AG04449 (cell line): ENCODE measurements at regions of chr17 and their contacts with region 1.

Region 1: DNA sequence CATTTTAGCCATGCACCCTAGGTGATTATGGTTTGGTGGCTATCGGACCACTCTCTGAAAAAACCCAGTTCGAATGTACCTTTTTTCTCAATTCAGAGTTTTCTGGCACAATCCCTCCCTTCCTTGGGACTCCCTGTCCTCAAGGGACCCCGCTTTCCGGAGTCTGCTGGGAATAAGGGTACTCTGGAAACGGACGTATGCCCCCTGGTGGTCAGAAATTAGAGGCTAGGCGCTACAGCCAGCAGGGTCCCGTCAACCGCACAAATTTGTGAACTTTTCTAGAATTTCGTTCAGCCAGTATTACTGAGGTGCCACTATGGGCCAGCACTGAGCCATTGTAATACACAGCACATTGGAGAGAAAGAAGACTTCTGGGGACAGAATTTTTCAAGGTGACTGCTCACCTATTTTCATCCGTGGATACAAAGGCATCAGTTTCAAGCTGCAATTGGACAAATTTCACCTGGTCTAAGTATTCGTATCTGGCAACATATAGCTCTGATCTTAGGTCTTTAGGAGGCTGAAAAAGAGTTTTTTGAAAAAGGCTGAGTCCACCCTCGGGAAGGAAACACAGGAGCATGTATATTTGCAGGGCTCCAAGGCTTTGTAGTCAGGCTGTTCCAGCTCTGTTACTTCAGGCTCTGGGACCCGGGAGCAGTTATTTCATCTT is 27.1 kb upstream of the CRYBA1 start:
- DNase-seq: no peak
- H3K4me3 ChIP-seq: no peak overlapping the region
- CTCF ChIP-seq: peak; percentile 87

Region 2: DNA sequence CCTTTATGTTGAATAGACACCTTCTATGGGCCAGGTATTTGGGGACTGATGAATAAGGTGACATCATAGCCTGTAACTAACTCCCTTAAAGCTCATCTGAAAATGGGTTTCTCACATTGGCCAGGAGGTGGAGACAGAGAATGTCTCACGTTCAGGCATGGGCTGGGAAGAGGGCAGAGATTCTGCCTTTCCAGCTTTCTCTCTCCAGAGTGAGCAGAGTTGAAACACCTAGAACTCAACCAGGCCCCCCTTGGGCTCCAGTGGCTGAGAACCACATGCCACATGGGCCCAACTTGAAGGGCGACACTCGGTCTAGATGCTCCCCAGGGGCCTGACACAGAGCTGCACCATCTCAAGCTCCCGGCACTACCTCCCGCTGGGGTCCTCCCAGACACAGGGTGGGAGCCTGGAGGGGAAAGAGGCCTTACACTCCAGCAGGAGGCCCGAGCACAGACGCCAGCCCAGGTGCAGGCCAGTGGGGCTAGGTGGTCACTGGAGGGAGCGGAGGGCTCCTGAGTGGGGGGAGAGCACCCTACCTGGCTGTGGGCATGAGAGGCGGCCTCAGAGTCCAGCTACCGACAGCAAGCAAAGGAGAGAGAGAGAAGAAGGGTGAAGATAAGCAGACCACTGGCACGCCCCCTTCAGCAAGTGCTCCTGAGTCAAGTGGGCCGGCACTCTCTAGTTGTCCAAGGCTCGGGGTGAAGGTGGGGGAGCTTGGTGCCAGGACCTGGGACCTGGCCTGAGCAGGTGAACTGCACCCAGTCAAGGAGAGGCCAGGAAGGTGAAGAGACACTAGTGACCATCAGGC is 95.2 kb before region 1 on chr17:
- CTCF ChIA-PET with region 1: interaction called, 59 read pairs
- POLR2A ChIA-PET with region 1: no interaction called
- DNase-seq: no peak
- H3K4me3 ChIP-seq: no peak overlapping the region
- CTCF ChIP-seq: peak; percentile 72

Region 3: GRCh38 chr17:29162738-29163341 is 56.7 kb before region 1 on chr17:
- CTCF ChIA-PET with region 1: interaction called, 454 read pairs
- POLR2A ChIA-PET with region 1: no interaction called
- DNase-seq: no peak
- H3K4me3 ChIP-seq: no peak overlapping the region
- CTCF ChIP-seq: no peak

Region 4: DNA sequence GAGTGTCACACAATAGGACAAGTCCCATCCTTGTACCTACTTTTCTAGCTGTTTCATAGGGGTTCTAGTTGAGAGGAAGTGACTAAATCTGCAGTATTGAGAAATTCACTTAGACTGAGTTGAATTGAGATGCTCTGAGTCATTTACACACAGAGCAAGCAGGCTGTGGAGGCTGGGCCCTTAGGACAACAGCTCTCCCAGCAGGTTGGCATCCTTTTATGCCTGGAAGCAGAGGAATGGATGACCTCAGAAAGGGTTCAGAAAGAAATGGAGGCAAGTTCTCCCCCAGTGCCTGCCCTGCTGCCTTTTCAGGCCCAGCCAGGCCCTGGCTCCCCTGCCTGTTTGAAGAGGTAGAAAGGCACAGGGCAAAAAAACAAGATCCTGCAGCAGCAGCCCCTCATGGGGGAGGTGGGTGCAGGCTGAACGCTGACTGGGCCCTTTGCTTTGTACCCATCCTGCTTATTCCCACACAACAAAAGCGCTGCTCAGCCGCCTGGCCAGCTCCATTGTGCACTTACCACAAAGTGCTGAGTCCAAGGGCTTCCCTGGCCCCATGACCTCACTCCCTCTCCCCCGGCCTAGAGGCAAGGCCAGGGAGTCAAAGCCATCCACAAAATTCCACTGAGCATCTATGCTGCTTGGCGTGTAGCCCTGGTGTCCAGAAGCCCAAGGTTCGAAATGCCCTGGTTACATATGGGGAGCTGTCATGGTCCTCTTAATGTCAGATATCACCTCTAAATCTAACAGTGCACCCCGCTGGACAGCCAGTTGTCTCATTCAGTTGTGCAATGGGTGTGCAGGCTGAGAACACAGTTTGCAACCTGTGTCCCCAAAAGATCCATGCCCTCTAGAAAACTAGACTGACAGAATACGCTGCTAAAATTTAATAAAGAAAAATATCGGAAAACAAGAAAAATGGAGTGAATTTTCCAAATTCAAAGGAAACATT is 21.8 kb after region 1 on chr17:
- CTCF ChIA-PET with region 1: interaction called, 70 read pairs
- POLR2A ChIA-PET with region 1: interaction called, 3 read pairs
- DNase-seq: peak; percentile 89
- H3K4me3 ChIP-seq: no peak overlapping the region
- CTCF ChIP-seq: no peak

Region 5: GRCh38 chr17:29293890-29294579 is 74.5 kb after region 1 on chr17 and contains the start of gene NUFIP2:
- CTCF ChIA-PET with region 1: interaction called, 62 read pairs
- POLR2A ChIA-PET with region 1: no interaction called
- DNase-seq: peak; percentile 83
- H3K4me3 ChIP-seq: peak within 1 kb of the TSS; percentile 99
- CTCF ChIP-seq: no peak

Region 6: GRCh38 chr17:29322363-29322762 is 102.8 kb after region 1 on chr17:
- CTCF ChIA-PET with region 1: no interaction called
- POLR2A ChIA-PET with region 1: no interaction called
- DNase-seq: no peak
- H3K4me3 ChIP-seq: no peak overlapping the region
- CTCF ChIP-seq: no peak